ENCODE measurements at regions of chr14 and their contacts with region 1.

Region 1: DNA sequence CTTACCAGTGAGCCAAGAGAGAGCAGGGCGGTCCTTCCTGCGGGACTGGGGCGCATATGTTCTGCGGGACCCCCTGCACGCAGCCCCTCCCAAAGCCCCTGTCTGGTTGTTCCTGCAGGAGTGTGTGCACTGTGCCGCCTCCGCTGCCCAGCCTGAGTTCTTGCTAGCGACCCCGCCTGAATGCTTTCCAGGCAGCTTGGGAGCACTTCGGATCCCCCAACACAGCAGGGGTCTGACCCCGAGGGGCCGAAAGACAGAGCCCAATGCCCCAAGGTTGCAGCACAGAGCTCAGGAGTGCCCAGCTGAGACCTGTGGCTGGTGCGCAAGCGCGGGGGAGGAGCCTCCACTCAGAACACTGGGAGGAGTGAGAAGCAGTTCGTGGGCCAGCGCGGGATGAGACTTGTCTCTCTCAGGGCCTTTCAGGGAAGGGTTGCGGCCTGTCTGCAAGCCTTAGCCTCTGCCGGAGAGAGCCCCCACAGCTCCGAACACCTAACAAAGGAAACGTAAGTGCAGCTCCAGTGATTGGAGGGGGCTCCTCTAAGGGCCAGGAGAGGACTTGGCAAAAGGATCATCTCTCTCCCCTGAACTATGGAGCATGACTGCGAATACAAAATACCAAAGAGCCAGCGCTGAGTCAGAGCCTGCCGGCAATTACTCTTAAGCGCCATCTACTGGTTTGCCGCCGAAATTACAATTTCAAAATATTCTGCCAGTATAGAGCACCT is 50.5 kb downstream of the GTF2A1 start:
- DNase-seq: peak; percentile 93
- H3K4me3 ChIP-seq: peak overlapping the region; percentile 63
- H3K27ac ChIP-seq: peak overlapping the region; percentile 85
- H3K4me1 ChIP-seq: peaks cover 6% of the 10 kb centered on the region
- H3K27me3 ChIP-seq: no peaks in the 10 kb centered on the region
- CTCF ChIP-seq: peak; percentile 92

Region 2: DNA sequence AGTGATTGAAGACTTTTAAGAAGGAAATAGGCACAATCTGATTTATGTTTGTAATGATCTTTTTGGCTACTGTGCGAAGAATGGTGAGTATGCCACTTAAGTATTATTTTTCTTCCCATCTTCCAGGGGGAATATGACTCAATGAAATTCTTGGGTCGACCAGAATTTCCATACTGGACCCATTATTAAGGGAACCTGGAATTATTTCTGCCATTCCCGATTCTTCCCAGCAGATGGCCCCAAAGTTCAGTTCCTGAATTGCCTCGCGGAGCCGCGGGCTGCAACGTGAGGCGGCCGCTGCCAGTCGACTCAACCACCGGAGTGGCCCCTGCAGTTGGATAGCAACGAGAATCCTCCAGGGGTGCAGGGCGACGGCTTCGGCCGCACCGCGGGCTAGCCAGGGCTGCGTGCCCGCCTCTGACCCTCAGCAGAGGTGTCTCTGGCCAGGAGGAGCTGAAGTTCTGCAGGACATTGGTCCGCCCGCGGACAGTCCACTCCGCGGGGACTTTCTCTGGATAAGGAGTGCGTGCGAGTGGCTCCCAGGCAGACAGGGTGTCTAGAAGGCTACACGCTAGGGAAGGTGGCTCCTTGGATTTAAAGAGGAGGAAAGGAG is 215.5 kb before region 1 on chr14:
- CTCF ChIA-PET with region 1: no interaction called
- POLR2A ChIA-PET with region 1: no interaction called
- intact Hi-C with region 1: loop called (anchors 2 kb)
- DNase-seq: peak; percentile 83
- H3K4me3 ChIP-seq: peak overlapping the region; percentile 45
- H3K27ac ChIP-seq: no peak overlapping the region
- H3K4me1 ChIP-seq: no peaks in the 10 kb centered on the region
- H3K27me3 ChIP-seq: peaks cover 73% of the 10 kb centered on the region
- CTCF ChIP-seq: peak; percentile 79

Region 3: DNA sequence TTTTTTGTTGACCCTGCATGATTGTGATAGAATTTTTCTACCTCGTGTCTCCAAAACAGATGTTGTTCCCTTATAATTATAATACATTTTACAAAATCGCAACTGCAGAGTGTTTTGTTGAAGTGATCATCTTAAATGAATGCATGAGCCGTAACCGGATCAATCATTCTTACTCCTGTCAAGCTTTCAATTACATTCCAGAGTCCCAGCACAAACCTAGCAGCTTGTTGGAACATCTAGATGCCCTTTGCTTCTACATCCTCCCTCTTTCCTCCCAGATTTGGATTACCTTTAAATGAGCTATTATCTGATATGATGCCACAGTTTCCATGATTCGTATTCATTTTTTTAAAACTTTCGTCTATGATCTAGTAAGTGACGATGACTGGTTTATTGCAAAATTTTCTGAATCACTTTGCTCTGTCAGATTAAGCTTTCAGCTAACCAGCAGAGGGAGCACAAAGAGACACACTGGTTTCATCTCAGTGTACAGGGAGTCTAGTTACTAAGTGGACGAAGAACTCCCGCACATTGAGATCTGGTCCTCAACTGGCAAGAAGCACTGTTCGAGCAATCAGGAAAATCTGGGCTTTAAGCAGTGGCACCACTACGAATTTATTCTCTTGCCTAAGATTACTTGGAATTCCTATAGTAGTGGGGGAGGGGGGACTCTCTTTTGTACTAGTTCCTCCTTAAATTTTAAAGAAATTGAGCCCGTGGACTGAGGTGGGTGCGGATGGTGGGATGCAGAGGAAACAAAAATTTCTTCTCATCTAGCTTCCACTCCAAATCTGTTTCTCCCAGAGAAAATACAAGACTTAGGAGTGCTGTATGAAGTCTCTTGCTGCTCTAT is 174.0 kb before region 1 on chr14:
- CTCF ChIA-PET with region 1: interaction called, 4 read pairs
- POLR2A ChIA-PET with region 1: no interaction called
- intact Hi-C with region 1: loop called (anchors 2 kb)
- DNase-seq: peak; percentile 81
- H3K4me3 ChIP-seq: no peak overlapping the region
- H3K27ac ChIP-seq: no peak overlapping the region
- H3K4me1 ChIP-seq: no peaks in the 10 kb centered on the region
- H3K27me3 ChIP-seq: peaks cover 25% of the 10 kb centered on the region
- CTCF ChIP-seq: peak; percentile 78

Region 4: GRCh38 chr14:81105378-81105777 is 64.9 kb before region 1 on chr14:
- CTCF ChIA-PET with region 1: no interaction called
- POLR2A ChIA-PET with region 1: no interaction called
- intact Hi-C with region 1: no loop called
- DNase-seq: no peak
- H3K4me3 ChIP-seq: no peak overlapping the region
- H3K27ac ChIP-seq: no peak overlapping the region
- H3K4me1 ChIP-seq: no peaks in the 10 kb centered on the region
- H3K27me3 ChIP-seq: no peaks in the 10 kb centered on the region
- CTCF ChIP-seq: no peak

Region 5: DNA sequence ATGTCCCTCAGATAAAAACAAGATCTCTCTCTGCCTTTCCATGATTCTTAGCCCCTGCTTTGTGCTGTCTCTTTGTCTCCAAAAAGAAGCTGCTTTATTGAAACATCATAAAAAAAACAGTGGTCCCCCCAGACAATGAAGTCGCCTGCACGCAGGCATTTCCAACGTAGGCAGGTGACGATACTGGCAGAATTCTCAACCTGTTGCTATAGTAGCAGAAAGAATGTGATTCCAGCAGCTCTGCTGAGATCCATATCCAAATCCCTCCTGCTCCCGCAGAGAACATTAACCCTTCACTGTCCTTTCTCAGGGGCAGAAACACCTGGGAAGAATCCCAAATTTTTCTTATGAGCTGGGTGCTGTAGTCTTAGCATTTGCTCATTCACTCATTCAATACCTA is 145.1 kb after region 1 on chr14:
- CTCF ChIA-PET with region 1: no interaction called
- POLR2A ChIA-PET with region 1: no interaction called
- intact Hi-C with region 1: no loop called
- DNase-seq: no peak
- H3K4me3 ChIP-seq: no peak overlapping the region
- H3K27ac ChIP-seq: no peak overlapping the region
- H3K4me1 ChIP-seq: peaks cover 7% of the 10 kb centered on the region
- H3K27me3 ChIP-seq: no peaks in the 10 kb centered on the region
- CTCF ChIP-seq: no peak

Measured in A673 (cell line).